PC-9 (cell line): ENCODE measurements at regions of chr20 and their contacts with region 1.

Region 1: DNA sequence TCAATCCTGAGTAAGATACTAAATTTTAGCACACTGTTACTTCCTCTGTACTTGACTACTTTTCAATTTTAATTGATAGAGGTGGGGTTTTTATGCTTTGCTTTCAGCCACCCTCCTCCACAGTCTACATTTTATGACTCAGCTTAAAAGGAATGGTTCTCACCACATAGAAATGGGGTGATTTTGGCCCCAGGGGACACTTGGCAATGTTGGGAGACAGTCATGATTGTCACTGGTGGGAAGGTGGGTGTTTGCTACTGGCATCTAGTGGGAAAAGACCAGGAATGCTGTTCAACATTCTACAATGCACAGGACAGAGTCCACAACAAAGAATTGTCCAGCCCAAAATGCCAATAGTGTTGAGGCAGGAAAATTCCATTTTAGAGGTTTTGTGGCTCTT is 71.3 kb downstream of the PCSK2 start:
- DNase-seq: no peak
- H3K4me3 ChIP-seq: no peak overlapping the region
- H3K27ac ChIP-seq: no peak overlapping the region
- H3K4me1 ChIP-seq: no peaks in the 10 kb centered on the region
- H3K27me3 ChIP-seq: 0 out of 2 replicates have a peak, but pooled peaks cover 13% of the 10 kb centered on the region
- CTCF ChIP-seq: no peak

Region 2: GRCh38 chr20:17276101-17276500 is 22.1 kb before region 1 on chr20:
- CTCF ChIA-PET with region 1: interaction called, 3 read pairs
- POLR2A ChIA-PET with region 1: interaction called, 23 read pairs
- intact Hi-C with region 1: no loop called
- DNase-seq: no peak
- H3K4me3 ChIP-seq: no peak overlapping the region
- H3K27ac ChIP-seq: no peak overlapping the region
- H3K4me1 ChIP-seq: no peaks in the 10 kb centered on the region
- H3K27me3 ChIP-seq: no peaks in the 10 kb centered on the region
- CTCF ChIP-seq: no peak